B cell (primary cell): ENCODE measurements at regions of chr21 and their contacts with region 1.

Region 1: GRCh38 chr21:28745131-28746016 is 247.3 kb downstream of the LTN1 start:
- DNase-seq: peak; percentile 80
- ATAC-seq: peak; percentile 80
- H3K4me3 ChIP-seq: peak overlapping the region; percentile 13 to 65 (median 48)
- H3K4me3 Mint-ChIP-seq: no peak overlapping the region
- H3K27ac ChIP-seq: no peak overlapping the region
- H3K27ac Mint-ChIP-seq: no peak overlapping the region
- H3K4me1 ChIP-seq: peaks cover 4 to 6% of the 10 kb centered on the region in 2 donors
- H3K4me1 Mint-ChIP-seq: no peaks in the 10 kb centered on the region
- H3K27me3 ChIP-seq: no peaks in the 10 kb centered on the region
- H3K27me3 Mint-ChIP-seq: no peaks in the 10 kb centered on the region
- CTCF ChIP-seq: peak; percentile 81

Region 2: DNA sequence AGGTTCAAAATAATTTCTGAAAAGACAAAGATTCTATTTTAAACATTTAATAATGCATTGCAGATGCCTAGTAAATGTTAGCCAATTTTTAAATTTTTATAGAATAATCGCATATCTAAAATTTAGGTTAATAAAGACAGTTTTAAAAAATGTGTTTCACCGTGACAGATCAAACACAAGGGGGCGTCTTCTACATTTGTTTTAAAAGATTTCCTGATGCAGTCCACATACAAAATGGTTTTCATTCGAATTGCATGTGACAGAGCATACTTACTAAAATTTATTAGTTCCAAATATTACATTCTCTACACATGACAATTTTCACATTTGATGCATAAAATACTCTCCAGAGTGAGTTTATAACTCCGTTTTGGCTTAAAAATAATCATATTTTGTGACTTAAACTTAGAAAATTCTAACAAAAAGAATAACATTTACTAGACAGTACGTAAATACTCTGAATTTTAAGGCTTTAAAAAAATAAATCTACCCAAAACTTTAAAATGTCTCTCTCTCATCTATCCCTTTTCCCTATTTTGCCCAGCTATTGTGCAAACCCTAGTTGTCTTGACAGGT is 1975.7 kb before region 1 on chr21:
- CTCF ChIA-PET with region 1: interaction called, 4 read pairs
- POLR2A ChIA-PET with region 1: no interaction called
- intact Hi-C with region 1: loop called (anchors 1 kb)
- DNase-seq: no peak
- ATAC-seq: no peak
- H3K4me3 ChIP-seq: no peak overlapping the region
- H3K4me3 Mint-ChIP-seq: no peak overlapping the region
- H3K27ac ChIP-seq: no peak overlapping the region
- H3K27ac Mint-ChIP-seq: no peak overlapping the region
- H3K4me1 ChIP-seq: no peaks in the 10 kb centered on the region
- H3K4me1 Mint-ChIP-seq: no peaks in the 10 kb centered on the region
- H3K27me3 ChIP-seq: no peaks in the 10 kb centered on the region
- H3K27me3 Mint-ChIP-seq: no peaks in the 10 kb centered on the region
- CTCF ChIP-seq: peak; percentile 7

Region 3: DNA sequence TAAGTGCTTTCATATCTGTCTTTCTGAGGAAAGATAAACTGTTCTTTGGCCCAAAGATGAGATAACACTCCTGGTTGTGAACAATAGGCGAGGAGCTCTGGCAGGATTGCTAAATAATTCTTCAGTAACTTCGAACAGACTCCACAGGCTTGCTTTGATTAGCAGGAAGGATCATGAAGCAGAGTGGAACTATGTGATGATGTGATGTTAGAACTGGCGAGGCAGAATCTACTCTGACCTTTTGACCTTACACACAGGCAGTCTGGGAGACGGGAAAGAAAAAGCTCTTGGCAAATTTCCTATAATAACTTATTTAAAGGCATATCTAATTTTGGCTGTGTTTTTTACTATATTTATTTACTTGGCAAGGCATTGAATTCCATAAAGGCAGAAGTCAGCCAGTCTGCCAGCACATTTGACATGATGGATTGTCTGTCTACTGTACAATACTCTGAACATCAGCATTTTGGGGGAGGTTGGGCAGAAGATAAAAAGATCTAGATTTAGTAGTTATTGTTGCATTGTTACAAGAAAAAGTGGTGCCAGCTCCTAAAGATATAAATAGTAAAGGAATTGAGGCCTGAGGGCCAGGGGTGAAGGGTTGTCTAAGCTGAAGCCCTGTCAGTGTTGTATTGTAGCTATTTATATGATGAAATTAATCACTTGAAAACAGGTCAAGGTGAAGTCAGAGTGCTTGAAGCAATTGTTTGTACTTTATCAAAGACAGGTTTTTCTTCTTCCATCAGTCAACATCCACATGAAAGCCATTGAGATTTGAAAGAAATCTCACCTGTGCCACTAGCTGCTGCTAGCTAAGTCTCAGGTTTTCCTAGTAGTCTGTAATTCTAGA is 461.5 kb before region 1 on chr21:
- CTCF ChIA-PET with region 1: no interaction called
- POLR2A ChIA-PET with region 1: no interaction called
- intact Hi-C with region 1: no loop called
- DNase-seq: no peak
- ATAC-seq: no peak
- H3K4me3 ChIP-seq: no peak overlapping the region
- H3K4me3 Mint-ChIP-seq: no peak overlapping the region
- H3K27ac ChIP-seq: no peak overlapping the region
- H3K27ac Mint-ChIP-seq: no peak overlapping the region
- H3K4me1 ChIP-seq: no peaks in the 10 kb centered on the region
- H3K4me1 Mint-ChIP-seq: no peaks in the 10 kb centered on the region
- H3K27me3 ChIP-seq: no peaks in the 10 kb centered on the region
- H3K27me3 Mint-ChIP-seq: no peaks in the 10 kb centered on the region
- CTCF ChIP-seq: no peak

Region 4: GRCh38 chr21:28516991-28517592 is 228.3 kb before region 1 on chr21:
- CTCF ChIA-PET with region 1: interaction called, 173 read pairs
- POLR2A ChIA-PET with region 1: no interaction called
- intact Hi-C with region 1: no loop called
- DNase-seq: peak; percentile 67
- ATAC-seq: peak; percentile 82
- H3K4me3 ChIP-seq: no peak overlapping the region
- H3K4me3 Mint-ChIP-seq: no peak overlapping the region
- H3K27ac ChIP-seq: no peak overlapping the region
- H3K27ac Mint-ChIP-seq: no peak overlapping the region
- H3K4me1 ChIP-seq: peaks cover 0 to 9% of the 10 kb centered on the region in 2 donors
- H3K4me1 Mint-ChIP-seq: peaks cover 8% of the 10 kb centered on the region
- H3K27me3 ChIP-seq: no peaks in the 10 kb centered on the region
- H3K27me3 Mint-ChIP-seq: no peaks in the 10 kb centered on the region
- CTCF ChIP-seq: peak; percentile 74

Region 5: DNA sequence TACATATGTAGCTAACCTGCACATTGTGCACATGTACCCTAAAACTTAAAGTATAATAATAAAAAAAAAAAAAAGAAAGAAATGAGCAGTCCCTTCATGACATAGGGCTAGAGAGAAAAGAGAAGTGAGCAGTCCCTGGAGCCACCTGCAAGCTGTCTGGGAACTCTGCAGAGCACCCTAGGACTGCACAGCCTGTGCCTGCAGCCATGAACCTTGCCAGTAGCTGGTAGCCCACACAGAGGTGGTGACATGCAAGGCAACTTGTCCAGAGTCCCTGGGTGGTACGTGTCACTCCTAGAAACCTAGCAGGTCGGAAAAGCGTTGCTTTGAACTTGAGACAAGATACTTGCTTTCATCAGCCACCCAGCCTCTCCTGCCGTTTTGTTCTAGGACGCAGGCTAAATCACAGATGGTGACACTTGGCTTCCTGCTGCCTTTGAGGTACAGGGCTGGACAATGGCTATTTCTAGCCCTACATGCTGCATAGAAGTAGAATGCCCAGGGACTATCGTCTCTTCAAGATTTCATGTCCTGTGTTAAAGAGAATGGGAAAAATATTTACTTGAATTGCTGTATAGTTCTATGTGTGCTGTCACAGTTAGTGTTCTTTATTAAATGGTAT is 13.6 kb before region 1 on chr21:
- CTCF ChIA-PET with region 1: interaction called, 41 read pairs
- POLR2A ChIA-PET with region 1: no interaction called
- intact Hi-C with region 1: no loop called
- DNase-seq: no peak
- ATAC-seq: no peak
- H3K4me3 ChIP-seq: no peak overlapping the region
- H3K4me3 Mint-ChIP-seq: no peak overlapping the region
- H3K27ac ChIP-seq: no peak overlapping the region
- H3K27ac Mint-ChIP-seq: no peak overlapping the region
- H3K4me1 ChIP-seq: no peaks in the 10 kb centered on the region
- H3K4me1 Mint-ChIP-seq: no peaks in the 10 kb centered on the region
- H3K27me3 ChIP-seq: no peaks in the 10 kb centered on the region
- H3K27me3 Mint-ChIP-seq: no peaks in the 10 kb centered on the region
- CTCF ChIP-seq: no peak

Region 6: DNA sequence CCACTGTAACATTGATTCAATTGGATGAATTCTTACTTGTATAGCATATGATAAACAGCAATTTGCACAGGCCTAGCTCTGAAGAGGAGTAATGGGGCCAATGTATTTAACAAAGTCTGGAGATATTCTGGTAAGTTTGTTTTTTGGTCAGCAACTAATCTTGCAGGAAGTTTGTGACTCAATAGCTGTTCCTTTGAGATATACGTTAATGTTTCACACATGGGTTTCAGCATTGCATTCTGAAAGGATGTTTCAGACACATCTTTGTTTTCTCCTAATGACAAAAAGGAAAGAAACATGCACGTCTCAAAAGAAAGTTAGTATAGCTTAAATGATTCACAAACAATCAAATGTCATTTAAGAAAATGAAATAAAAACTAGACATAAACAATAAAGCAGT is 198.3 kb after region 1 on chr21:
- CTCF ChIA-PET with region 1: interaction called, 12 read pairs
- POLR2A ChIA-PET with region 1: no interaction called
- intact Hi-C with region 1: loop called (anchors 1 kb)
- DNase-seq: no peak
- ATAC-seq: no peak
- H3K4me3 ChIP-seq: no peak overlapping the region
- H3K4me3 Mint-ChIP-seq: no peak overlapping the region
- H3K27ac ChIP-seq: no peak overlapping the region
- H3K27ac Mint-ChIP-seq: no peak overlapping the region
- H3K4me1 ChIP-seq: no peaks in the 10 kb centered on the region
- H3K4me1 Mint-ChIP-seq: no peaks in the 10 kb centered on the region
- H3K27me3 ChIP-seq: no peaks in the 10 kb centered on the region
- H3K27me3 Mint-ChIP-seq: no peaks in the 10 kb centered on the region
- CTCF ChIP-seq: no peak